ENCODE measurements at regions of chr22 and their contacts with region 1.

Region 1: GRCh38 chr22:43187171-43188099 is 501 bp upstream of the TTLL12 start:
- DNase-seq: peak; percentile 94
- H3K4me3 ChIP-seq: peak overlapping the region; percentile 44 to 67 (median 49)
- H3K27ac ChIP-seq: peak overlapping the region; percentile 82
- H3K4me1 ChIP-seq: peaks cover 26% of the 10 kb centered on the region
- H3K27me3 ChIP-seq: peaks cover 2 to 16% of the 10 kb centered on the region in 2 experiments
- CTCF ChIP-seq: peak; percentile 62 to 77
- POLR2A ChIP-seq: peak; percentile 84

Region 2: DNA sequence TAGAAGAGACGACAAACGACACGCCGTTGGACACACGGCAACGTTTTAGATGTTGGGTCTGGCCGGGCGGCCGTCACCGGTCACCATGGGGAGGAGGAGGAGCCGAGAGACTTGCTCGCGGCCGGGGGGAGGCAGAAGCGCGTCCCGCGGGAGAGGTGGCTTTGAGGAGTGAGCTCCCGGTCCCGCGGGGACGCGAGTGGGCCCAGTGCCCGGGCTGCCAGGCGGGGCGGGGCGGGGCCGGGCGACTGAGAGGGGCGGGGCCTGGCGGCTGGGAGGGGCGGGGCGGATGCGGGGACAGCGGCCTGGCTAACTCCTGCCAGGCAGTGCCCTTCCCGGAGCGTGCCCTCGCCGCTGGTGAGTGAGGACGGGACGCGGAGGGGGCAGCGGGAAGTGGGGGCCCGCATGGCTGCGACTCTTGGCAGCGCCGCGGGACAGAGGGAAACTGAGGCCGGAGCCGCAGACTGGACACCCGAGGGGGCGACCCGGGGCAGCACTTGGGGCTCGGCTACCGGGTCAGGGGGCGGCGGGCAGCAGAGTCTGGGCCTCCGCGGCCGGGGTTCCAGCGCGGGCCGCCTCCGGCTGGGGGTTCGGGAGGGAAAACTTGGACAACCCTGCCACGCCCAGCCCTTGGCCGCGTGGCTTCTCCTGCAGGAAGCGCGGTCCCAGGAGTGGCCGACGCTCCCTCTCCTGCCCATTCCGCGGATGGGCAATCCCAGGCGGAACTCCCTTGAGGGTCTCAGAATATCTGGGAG is 36.0 kb before region 1 on chr22 and contains the start of gene TSPO:
- CTCF ChIA-PET with region 1: interaction called, 3 read pairs
- POLR2A ChIA-PET with region 1: interaction called, 3 read pairs
- dilution Hi-C with region 1: no loop called
- intact Hi-C with region 1: loop called (anchors 2 kb)
- DNase-seq: peak; percentile 38
- H3K4me3 ChIP-seq: peak within 1 kb of the TSS; percentile 52 to 77 (median 65)
- H3K27ac ChIP-seq: peak within 1 kb of the TSS; percentile 39
- H3K4me1 ChIP-seq: peaks cover 3% of the 10 kb centered on the region
- H3K27me3 ChIP-seq: no peaks in the 10 kb centered on the region
- CTCF ChIP-seq: no peak
- POLR2A ChIP-seq: peak; percentile 81
- total RNA-seq, gene TSPO: 328 and 346 TPM in 2 replicates

Region 3: GRCh38 chr22:43203471-43203981 is 16.1 kb after region 1 on chr22:
- CTCF ChIA-PET with region 1: interaction called, 11 read pairs
- POLR2A ChIA-PET with region 1: no interaction called
- dilution Hi-C with region 1: no loop called
- intact Hi-C with region 1: no loop called
- DNase-seq: no peak
- H3K4me3 ChIP-seq: no peak overlapping the region
- H3K27ac ChIP-seq: no peak overlapping the region
- H3K4me1 ChIP-seq: no peaks in the 10 kb centered on the region
- H3K27me3 ChIP-seq: no peaks in the 10 kb centered on the region
- CTCF ChIP-seq: no peak
- POLR2A ChIP-seq: no peak

Region 4: GRCh38 chr22:43230971-43231723 is 43.7 kb after region 1 on chr22:
- CTCF ChIA-PET with region 1: interaction called, 30 read pairs
- POLR2A ChIA-PET with region 1: no interaction called
- dilution Hi-C with region 1: no loop called
- intact Hi-C with region 1: loop called (anchors 1 kb)
- DNase-seq: peak; percentile 50
- H3K4me3 ChIP-seq: no peak overlapping the region
- H3K27ac ChIP-seq: no peak overlapping the region
- H3K4me1 ChIP-seq: no peaks in the 10 kb centered on the region
- H3K27me3 ChIP-seq: no peaks in the 10 kb centered on the region
- CTCF ChIP-seq: peak; percentile 83 to 91
- POLR2A ChIP-seq: no peak

Region 5: GRCh38 chr22:43263645-43264514 is 76.4 kb after region 1 on chr22:
- CTCF ChIA-PET with region 1: interaction called, 5 read pairs
- POLR2A ChIA-PET with region 1: no interaction called
- dilution Hi-C with region 1: no loop called
- intact Hi-C with region 1: loop called (anchors 2 kb)
- DNase-seq: peak; percentile 97
- H3K4me3 ChIP-seq: peak overlapping the region in 1 of 3 experiments; percentile 30
- H3K27ac ChIP-seq: peak overlapping the region; percentile 93
- H3K4me1 ChIP-seq: peaks cover 23% of the 10 kb centered on the region
- H3K27me3 ChIP-seq: no peaks in the 10 kb centered on the region
- CTCF ChIP-seq: no peak
- POLR2A ChIP-seq: no peak

Region 6: DNA sequence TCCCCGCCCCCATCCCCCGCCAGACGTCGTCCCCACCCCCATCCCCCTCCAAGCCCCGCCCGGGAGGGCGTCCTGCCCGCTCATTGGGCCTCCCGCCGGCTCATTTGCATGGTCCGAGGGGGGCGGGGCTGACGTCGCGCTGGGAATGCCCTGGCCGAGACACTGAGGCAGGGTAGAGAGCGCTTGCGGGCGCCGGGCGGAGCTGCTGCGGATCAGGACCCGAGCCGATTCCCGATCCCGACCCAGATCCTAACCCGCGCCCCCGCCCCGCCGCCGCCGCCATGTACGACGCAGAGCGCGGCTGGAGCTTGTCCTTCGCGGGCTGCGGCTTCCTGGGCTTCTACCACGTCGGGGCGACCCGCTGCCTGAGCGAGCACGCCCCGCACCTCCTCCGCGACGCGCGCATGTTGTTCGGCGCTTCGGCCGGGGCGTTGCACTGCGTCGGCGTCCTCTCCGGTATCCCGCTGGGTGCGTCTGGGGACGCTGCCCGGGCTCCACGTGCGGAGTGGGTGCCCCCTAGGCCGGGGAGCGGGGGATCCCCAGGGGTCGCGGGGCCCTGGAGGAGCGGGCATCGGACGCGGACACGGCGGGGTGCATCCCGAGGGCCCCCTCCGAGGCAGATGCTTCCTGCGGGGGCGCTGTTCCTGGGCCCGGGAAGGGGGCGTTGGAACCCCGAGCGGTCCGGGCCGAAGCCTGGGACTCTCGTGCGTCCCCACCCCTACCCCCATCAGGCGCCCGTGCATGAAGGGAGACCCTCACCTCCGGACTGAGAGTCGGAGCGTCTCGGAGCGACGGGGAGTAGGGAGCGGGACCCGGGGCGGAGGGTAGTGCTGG is 736.4 kb after region 1 on chr22 and contains the start of gene PNPLA3:
- CTCF ChIA-PET with region 1: no interaction called
- POLR2A ChIA-PET with region 1: no interaction called
- dilution Hi-C with region 1: no loop called
- intact Hi-C with region 1: loop called (anchors 5 kb)
- DNase-seq: peak; percentile 88
- H3K4me3 ChIP-seq: peak within 1 kb of the TSS; percentile 55 to 74 (median 63)
- H3K27ac ChIP-seq: peak within 1 kb of the TSS; percentile 27
- H3K4me1 ChIP-seq: peaks cover 30% of the 10 kb centered on the region
- H3K27me3 ChIP-seq: no peaks in the 10 kb centered on the region
- CTCF ChIP-seq: peak; percentile 29 to 36
- POLR2A ChIP-seq: peak; percentile 47
- total RNA-seq, gene PNPLA3: 12.1 and 12.3 TPM in 2 replicates

Measured in endothelial cell of umbilical vein (primary cell).